GM10248 (cell line): ENCODE measurements at regions of chr10 and their contacts with region 1.

Region 1: DNA sequence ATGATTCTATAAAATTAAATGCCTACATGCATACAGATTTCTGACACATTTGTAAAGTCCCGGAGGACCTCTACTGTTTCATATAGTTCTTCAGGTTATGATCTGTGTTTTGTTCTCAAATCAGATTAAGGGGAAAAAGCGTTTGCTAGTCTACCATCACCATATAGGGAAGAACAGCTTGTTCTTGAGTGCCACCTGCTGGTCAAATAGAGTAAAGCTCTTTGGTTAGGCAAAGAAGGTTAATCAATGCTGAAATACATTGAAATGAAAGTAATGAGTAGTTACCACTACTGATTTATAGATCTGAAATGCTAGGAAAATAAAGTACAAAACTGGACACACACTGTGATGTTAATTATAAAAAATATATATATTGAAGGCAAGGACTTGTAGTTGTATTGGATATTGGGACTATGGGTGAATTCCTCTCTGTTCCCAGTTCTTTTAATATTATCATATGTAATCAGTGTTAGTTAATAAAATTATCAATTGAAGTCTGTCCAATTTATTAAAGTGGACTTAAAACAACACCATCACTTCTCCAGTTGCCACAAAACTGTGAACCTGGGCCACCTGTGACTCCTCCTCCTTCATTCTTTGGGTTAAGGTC is 72.6 kb upstream of the PDLIM1 start:
- DNase-seq: peak; percentile 71
- CTCF ChIP-seq: peak; percentile 84

Region 2: DNA sequence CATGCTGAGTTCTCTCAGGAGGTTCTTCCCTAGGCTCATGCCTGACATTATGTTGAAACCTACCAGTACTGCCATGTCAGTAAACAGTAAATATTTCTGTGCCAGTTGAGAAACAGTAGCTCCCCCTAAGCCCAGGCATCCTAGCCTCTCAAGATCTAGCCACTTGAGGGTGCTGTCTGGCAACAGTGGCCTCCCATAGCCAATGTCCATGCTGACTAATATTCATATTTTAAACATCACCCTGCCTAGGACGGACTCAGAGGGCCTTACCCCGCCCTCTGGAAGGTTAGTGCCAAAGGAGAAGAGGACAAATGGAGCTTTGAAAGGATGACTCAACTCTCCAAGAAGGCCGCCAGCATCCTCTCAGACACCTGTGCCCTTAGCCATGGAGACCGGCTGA is 161.7 kb before region 1 on chr10:
- CTCF ChIA-PET with region 1: interaction called, 24 read pairs
- POLR2A ChIA-PET with region 1: no interaction called
- DNase-seq: no peak
- CTCF ChIP-seq: no peak

Region 3: GRCh38 chr10:95260397-95260881 is 103.0 kb before region 1 on chr10:
- CTCF ChIA-PET with region 1: interaction called, 11 read pairs
- POLR2A ChIA-PET with region 1: no interaction called
- DNase-seq: peak; percentile 38
- CTCF ChIP-seq: no peak

Region 4: DNA sequence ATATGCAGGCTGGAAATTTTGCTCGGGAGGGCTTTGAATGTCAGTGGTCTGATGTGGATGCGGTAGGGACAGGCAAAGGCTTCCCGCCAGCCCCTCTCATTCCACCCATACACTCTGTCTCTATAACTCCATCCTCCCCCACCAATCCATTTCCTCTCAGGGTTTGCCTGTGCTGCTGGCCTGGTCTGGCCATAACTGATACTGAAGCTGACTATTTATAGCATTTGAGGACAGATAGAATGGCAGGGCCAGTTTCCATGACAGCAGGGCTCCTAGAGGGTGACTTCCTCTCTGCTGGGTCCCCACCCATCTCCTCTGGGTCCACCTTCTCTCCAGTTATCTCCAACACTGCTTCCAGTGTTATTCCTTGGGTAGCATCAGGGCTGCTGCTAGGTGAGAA is 66.0 kb before region 1 on chr10:
- CTCF ChIA-PET with region 1: interaction called, 12 read pairs
- POLR2A ChIA-PET with region 1: no interaction called
- DNase-seq: peak; percentile 39
- CTCF ChIP-seq: no peak

Region 5: GRCh38 chr10:95391581-95392216 is 28.3 kb after region 1 on chr10:
- CTCF ChIA-PET with region 1: interaction called, 22 read pairs
- POLR2A ChIA-PET with region 1: no interaction called
- DNase-seq: no peak
- CTCF ChIP-seq: no peak

Region 6: GRCh38 chr10:95567903-95568644 is 204.7 kb after region 1 on chr10:
- CTCF ChIA-PET with region 1: no interaction called
- POLR2A ChIA-PET with region 1: no interaction called
- DNase-seq: no peak
- CTCF ChIP-seq: no peak